A673 (cell line): ENCODE measurements at regions of chr1 and their contacts with region 1.

Region 1: GRCh38 chr1:27284425-27285273 is 37.3 kb upstream of the TMEM222 start:
- DNase-seq: peak; percentile 83
- H3K4me3 ChIP-seq: no peak overlapping the region
- H3K27ac ChIP-seq: no peak overlapping the region
- H3K4me1 ChIP-seq: no peaks in the 10 kb centered on the region
- H3K27me3 ChIP-seq: no peaks in the 10 kb centered on the region
- CTCF ChIP-seq: peak; percentile 88

Region 2: GRCh38 chr1:26864610-26865527 is 419.8 kb before region 1 on chr1:
- CTCF ChIA-PET with region 1: no interaction called
- POLR2A ChIA-PET with region 1: no interaction called
- intact Hi-C with region 1: no loop called
- DNase-seq: peak; percentile 99
- H3K4me3 ChIP-seq: peak overlapping the region; percentile 61
- H3K27ac ChIP-seq: peak overlapping the region; percentile 79
- H3K4me1 ChIP-seq: no peaks in the 10 kb centered on the region
- H3K27me3 ChIP-seq: no peaks in the 10 kb centered on the region
- CTCF ChIP-seq: 0 out of 2 replicates have a peak, but pooled peaks have one; percentile 22

Region 3: GRCh38 chr1:26999440-26999987 is 285.1 kb before region 1 on chr1:
- CTCF ChIA-PET with region 1: no interaction called
- POLR2A ChIA-PET with region 1: no interaction called
- intact Hi-C with region 1: loop called (anchors 5 kb)
- DNase-seq: peak; percentile 42
- H3K4me3 ChIP-seq: no peak overlapping the region
- H3K27ac ChIP-seq: no peak overlapping the region
- H3K4me1 ChIP-seq: peaks cover 20% of the 10 kb centered on the region
- H3K27me3 ChIP-seq: peaks cover 10% of the 10 kb centered on the region
- CTCF ChIP-seq: no peak

Region 4: DNA sequence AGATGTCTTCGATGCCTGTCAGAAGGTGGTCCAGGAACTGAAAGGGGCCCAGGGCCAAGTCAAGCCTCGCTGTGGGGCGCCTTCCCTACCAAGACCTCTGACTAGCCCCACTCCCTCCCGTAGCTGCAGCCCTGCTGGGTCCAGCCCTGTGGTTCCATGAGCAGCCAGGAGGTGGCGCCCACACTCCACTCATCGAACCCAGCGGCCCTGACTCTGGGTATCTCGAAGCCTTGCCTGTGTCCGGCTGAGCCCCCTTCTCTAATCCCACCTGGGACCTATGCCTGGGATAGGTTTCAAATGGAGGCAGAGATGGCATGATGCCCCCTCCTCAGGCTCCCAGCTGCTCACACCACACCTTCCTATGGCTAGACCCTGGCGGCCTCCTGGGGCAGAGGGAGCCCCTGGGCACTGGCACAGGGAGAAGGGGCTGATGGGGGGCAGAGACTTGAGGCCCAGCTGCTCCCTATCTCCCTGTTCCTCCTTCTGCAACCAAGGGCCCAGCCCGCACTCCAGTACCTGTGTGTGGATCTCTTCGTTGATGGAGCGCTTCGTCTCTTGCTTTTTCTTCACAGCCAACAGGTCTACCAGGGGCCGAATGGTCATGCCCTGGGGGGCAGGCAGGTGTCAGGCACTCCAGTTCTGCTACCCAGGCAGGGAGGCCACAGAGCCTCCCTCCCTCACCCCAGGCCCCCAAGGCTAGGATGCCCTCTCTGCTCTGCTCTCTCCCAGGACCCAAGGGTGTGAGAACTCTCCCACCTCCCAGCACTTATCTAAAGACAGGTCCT is 181.8 kb before region 1 on chr1:
- CTCF ChIA-PET with region 1: no interaction called
- POLR2A ChIA-PET with region 1: no interaction called
- intact Hi-C with region 1: loop called (anchors 1 kb)
- DNase-seq: peak; percentile 74
- H3K4me3 ChIP-seq: no peak overlapping the region
- H3K27ac ChIP-seq: no peak overlapping the region
- H3K4me1 ChIP-seq: peaks cover 16% of the 10 kb centered on the region
- H3K27me3 ChIP-seq: no peaks in the 10 kb centered on the region
- CTCF ChIP-seq: peak; percentile 96